ENCODE measurements at regions of chr11 and their contacts with region 1.

Region 1: GRCh38 chr11:8624698-8625097 is 30.7 kb upstream of the STK33 start:
- DNase-seq: no peak
- H3K4me3 ChIP-seq: no peak overlapping the region
- H3K4me3 Mint-ChIP-seq: no peak overlapping the region
- H3K27ac Mint-ChIP-seq: no peak overlapping the region
- H3K4me1 ChIP-seq: no peaks in the 10 kb centered on the region
- H3K4me1 Mint-ChIP-seq: no peaks in the 10 kb centered on the region
- H3K27me3 ChIP-seq: no peaks in the 10 kb centered on the region
- H3K27me3 Mint-ChIP-seq: no peaks in the 10 kb centered on the region
- CTCF ChIP-seq: no peak

Region 2: GRCh38 chr11:8747173-8747572 is 122.5 kb after region 1 on chr11:
- CTCF ChIA-PET with region 1: interaction called, 10 read pairs
- POLR2A ChIA-PET with region 1: no interaction called
- intact Hi-C with region 1: no loop called
- DNase-seq: no peak
- H3K4me3 ChIP-seq: no peak overlapping the region
- H3K4me3 Mint-ChIP-seq: no peak overlapping the region
- H3K27ac Mint-ChIP-seq: peak overlapping the region; percentile 25
- H3K4me1 ChIP-seq: peaks cover 25% of the 10 kb centered on the region
- H3K4me1 Mint-ChIP-seq: peaks cover 18% of the 10 kb centered on the region
- H3K27me3 ChIP-seq: no peaks in the 10 kb centered on the region
- H3K27me3 Mint-ChIP-seq: no peaks in the 10 kb centered on the region
- CTCF ChIP-seq: peak in 1 of 2 experiments; percentile 20

Measured in Caco-2 (cell line).